ENCODE measurements at regions of chr6 and their contacts with region 1.

Region 1: GRCh38 chr6:26175428-26176181 is 88.4 kb downstream of the HFE start:
- DNase-seq: no peak
- ATAC-seq: no peak
- H3K4me3 Mint-ChIP-seq: no peak overlapping the region
- H3K27ac Mint-ChIP-seq: peak overlapping the region; percentile 65
- H3K4me1 Mint-ChIP-seq: peaks cover 38% of the 10 kb centered on the region
- H3K27me3 Mint-ChIP-seq: no peaks in the 10 kb centered on the region
- CTCF ChIP-seq: no peak

Region 2: DNA sequence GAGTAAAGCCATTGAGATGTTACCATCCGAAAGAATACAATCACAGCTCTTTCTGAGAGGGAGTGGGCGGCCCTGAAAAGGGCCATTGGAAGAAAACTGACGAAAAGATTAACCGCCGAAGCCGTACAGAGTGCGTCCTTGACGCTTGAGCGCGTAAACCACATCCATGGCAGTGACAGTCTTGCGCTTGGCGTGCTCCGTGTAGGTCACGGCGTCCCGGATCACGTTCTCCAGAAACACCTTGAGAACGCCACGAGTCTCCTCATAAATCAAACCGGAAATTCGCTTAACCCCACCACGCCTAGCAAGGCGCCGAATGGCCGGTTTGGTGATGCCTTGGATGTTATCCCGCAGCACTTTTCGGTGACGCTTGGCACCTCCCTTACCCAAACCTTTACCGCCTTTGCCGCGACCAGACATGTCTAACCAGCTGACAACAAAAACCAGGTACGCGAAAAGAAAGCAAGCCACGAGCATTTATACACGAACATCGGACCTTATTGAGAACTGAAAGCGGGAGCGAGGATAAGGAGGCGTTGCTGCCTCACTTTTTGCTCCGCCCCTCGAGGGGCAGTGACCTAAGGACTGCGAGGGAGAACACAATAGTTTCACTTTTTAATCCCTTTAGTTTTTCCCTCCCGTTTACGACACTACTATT is 148.6 kb before region 1 on chr6:
- CTCF ChIA-PET with region 1: no interaction called
- POLR2A ChIA-PET with region 1: no interaction called
- intact Hi-C with region 1: no loop called
- DNase-seq: peak; percentile 72
- ATAC-seq: peak; percentile 64
- H3K4me3 Mint-ChIP-seq: peak overlapping the region; percentile 96
- H3K27ac Mint-ChIP-seq: peak overlapping the region; percentile 99
- H3K4me1 Mint-ChIP-seq: peaks cover 38% of the 10 kb centered on the region
- H3K27me3 Mint-ChIP-seq: peaks cover 2% of the 10 kb centered on the region
- CTCF ChIP-seq: no peak

Region 3: GRCh38 chr6:26204332-26205165 is 28.9 kb after region 1 on chr6:
- CTCF ChIA-PET with region 1: interaction called, 12 read pairs
- POLR2A ChIA-PET with region 1: interaction called, 132 read pairs
- intact Hi-C with region 1: no loop called
- DNase-seq: peak; percentile 70
- ATAC-seq: peak; percentile 59
- H3K4me3 Mint-ChIP-seq: no peak overlapping the region
- H3K27ac Mint-ChIP-seq: no peak overlapping the region
- H3K4me1 Mint-ChIP-seq: peaks cover 30% of the 10 kb centered on the region
- H3K27me3 Mint-ChIP-seq: peaks cover 2% of the 10 kb centered on the region
- CTCF ChIP-seq: no peak

Region 4: DNA sequence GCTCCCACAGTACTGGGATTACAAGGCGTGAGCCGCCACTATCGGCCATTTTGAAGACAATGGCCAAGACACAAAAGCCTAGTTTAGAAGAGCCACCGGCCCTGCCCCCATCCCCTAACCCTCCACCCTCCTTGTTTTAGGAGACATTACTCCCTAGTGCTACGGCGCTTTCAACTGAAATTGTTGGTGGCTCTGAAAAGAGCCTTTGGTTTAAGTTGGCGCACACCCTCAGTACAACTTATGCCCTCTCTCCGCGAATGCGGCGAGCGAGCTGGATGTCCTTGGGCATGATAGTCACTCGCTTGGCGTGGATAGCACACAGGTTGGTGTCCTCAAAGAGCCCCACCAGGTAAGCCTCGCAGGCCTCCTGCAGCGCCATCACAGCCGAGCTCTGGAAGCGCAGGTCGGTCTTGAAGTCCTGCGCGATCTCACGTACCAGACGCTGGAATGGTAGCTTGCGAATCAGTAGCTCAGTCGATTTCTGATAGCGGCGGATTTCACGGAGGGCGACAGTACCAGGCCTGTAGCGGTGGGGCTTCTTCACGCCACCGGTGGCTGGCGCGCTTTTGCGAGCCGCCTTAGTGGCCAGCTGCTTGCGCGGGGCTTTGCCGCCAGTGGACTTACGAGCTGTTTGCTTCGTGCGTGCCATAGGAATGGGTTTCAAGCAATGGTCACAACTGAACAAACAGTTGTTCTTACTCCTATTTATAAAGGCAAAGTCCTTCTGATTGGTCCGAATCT is 74.5 kb after region 1 on chr6:
- CTCF ChIA-PET with region 1: no interaction called
- POLR2A ChIA-PET with region 1: interaction called, 11 read pairs
- intact Hi-C with region 1: loop called (anchors 1 kb)
- DNase-seq: peak; percentile 57
- ATAC-seq: peak; percentile 63
- H3K4me3 Mint-ChIP-seq: peak overlapping the region; percentile 94
- H3K27ac Mint-ChIP-seq: peak overlapping the region; percentile 90
- H3K4me1 Mint-ChIP-seq: peaks cover 36% of the 10 kb centered on the region
- H3K27me3 Mint-ChIP-seq: no peaks in the 10 kb centered on the region
- CTCF ChIP-seq: no peak

Region 5: GRCh38 chr6:26389349-26389894 is 213.8 kb after region 1 on chr6:
- CTCF ChIA-PET with region 1: no interaction called
- POLR2A ChIA-PET with region 1: no interaction called
- intact Hi-C with region 1: no loop called
- DNase-seq: no peak
- ATAC-seq: no peak
- H3K4me3 Mint-ChIP-seq: no peak overlapping the region
- H3K27ac Mint-ChIP-seq: peak overlapping the region; percentile 16
- H3K4me1 Mint-ChIP-seq: peaks cover 61% of the 10 kb centered on the region
- H3K27me3 Mint-ChIP-seq: no peaks in the 10 kb centered on the region
- CTCF ChIP-seq: no peak

Region 6: DNA sequence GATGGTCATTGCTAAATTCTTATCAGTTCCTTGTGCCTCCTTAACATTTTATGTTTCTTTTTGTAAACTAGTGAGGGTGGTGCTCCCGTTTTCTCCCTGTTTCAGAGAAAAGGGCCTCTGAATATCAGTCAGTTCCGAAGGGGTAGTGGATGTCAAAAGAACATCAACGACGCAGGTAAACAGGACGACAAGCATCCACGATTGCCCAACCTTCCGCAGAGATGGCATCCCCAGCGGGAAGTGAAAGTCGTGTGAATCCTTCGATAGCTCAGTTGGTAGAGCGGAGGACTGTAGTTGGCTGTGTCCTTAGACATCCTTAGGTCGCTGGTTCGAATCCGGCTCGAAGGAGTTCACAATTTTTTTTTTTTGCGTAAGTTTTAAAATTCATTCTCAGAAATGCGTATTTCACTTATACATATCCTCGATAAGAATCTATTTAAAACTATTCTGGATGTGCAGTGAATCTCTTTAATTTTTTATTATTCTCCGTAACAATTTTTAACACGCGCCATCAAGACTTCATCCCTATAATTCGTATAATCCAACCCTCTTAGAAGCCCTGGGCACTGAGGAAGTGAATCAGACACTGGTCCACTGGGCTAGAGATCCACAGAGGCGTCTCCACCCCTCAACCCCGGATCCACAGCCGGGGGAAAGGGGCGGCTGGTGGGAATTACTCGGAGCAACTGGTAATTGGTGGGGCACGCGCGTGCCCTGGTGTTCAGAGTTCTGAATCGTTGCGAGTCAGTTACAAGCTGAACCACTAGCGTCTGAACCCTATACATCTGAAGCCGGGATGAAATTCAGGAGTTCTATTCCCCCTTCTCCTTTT is 393.2 kb after region 1 on chr6:
- CTCF ChIA-PET with region 1: no interaction called
- POLR2A ChIA-PET with region 1: interaction called, 4 read pairs
- intact Hi-C with region 1: loop called (anchors 1 kb)
- DNase-seq: peak; percentile 98
- ATAC-seq: peak; percentile 80
- H3K4me3 Mint-ChIP-seq: peak overlapping the region; percentile 96
- H3K27ac Mint-ChIP-seq: peak overlapping the region; percentile 98
- H3K4me1 Mint-ChIP-seq: peaks cover 26% of the 10 kb centered on the region
- H3K27me3 Mint-ChIP-seq: peaks cover 3% of the 10 kb centered on the region
- CTCF ChIP-seq: no peak

Region 7: GRCh38 chr6:27078734-27079357 is 903.2 kb after region 1 on chr6:
- CTCF ChIA-PET with region 1: interaction called, 3 read pairs
- POLR2A ChIA-PET with region 1: no interaction called
- intact Hi-C with region 1: loop called (anchors 1 kb)
- DNase-seq: no peak
- ATAC-seq: peak; percentile 65
- H3K4me3 Mint-ChIP-seq: peak overlapping the region; percentile 61
- H3K27ac Mint-ChIP-seq: no peak overlapping the region
- H3K4me1 Mint-ChIP-seq: peaks cover 6% of the 10 kb centered on the region
- H3K27me3 Mint-ChIP-seq: peaks cover 46% of the 10 kb centered on the region
- CTCF ChIP-seq: no peak

Measured in activated B cell treated with CpG ODN at 0.5 μM for 24 hours (primary cell).